Activated T-helper 2 cell treated with anti-CD3 and anti-CD28 coated beads, Interferon-gamma antibody, Interleukin-2, Interleukin-4, amounts not matched to agents 10 μg/mL and 5 μg/mL and 100 μg/mL, durations not matched to agents 14 hours and 24 hours and 36 hours (primary cell): ENCODE measurements at regions of chr19 and their contacts with region 1.

Region 1: DNA sequence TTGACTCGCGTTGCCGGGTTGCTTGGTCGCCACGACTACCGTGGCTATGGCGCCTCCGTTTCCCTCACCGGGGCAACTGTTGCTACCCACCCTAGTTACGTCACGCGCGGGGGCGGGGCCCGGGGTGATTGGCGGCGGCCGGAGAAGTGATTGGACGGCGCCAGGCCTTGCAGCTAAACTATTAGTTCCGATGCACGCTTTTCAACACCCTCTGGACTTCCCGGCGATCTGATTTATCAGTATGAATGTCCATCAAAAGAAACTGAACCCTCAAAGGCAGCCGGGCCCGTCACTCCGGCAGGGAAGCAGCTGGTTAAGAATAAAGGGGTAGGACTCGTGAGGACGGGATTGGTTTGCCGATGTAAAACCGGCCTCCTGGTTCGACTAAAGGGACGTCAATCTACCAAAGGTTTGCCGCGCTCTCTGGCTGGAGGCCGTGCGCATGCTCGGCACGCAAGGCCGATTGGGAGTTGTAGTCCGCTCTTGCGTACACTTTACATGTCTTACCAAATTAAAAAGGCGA is at the start of gene RFX1:
- DNase-seq: peak; percentile 99
- H3K4me3 Mint-ChIP-seq: peak within 1 kb of the TSS; percentile 84
- H3K27ac Mint-ChIP-seq: peak within 1 kb of the TSS; percentile 94
- H3K4me1 Mint-ChIP-seq: peaks cover 34% of the 10 kb centered on the region
- H3K27me3 Mint-ChIP-seq: no peaks in the 10 kb centered on the region
- total RNA-seq, gene RFX1: 15.7 and 17.0 TPM in 2 replicates

Region 2: GRCh38 chr19:13833330-13834243 is 172.7 kb before region 1 on chr19:
- intact Hi-C with region 1: no loop called
- DNase-seq: peak; percentile 90
- H3K4me3 Mint-ChIP-seq: peak overlapping the region; percentile 74
- H3K27ac Mint-ChIP-seq: peak overlapping the region; percentile 90
- H3K4me1 Mint-ChIP-seq: peaks cover 28% of the 10 kb centered on the region
- H3K27me3 Mint-ChIP-seq: no peaks in the 10 kb centered on the region

Region 3: DNA sequence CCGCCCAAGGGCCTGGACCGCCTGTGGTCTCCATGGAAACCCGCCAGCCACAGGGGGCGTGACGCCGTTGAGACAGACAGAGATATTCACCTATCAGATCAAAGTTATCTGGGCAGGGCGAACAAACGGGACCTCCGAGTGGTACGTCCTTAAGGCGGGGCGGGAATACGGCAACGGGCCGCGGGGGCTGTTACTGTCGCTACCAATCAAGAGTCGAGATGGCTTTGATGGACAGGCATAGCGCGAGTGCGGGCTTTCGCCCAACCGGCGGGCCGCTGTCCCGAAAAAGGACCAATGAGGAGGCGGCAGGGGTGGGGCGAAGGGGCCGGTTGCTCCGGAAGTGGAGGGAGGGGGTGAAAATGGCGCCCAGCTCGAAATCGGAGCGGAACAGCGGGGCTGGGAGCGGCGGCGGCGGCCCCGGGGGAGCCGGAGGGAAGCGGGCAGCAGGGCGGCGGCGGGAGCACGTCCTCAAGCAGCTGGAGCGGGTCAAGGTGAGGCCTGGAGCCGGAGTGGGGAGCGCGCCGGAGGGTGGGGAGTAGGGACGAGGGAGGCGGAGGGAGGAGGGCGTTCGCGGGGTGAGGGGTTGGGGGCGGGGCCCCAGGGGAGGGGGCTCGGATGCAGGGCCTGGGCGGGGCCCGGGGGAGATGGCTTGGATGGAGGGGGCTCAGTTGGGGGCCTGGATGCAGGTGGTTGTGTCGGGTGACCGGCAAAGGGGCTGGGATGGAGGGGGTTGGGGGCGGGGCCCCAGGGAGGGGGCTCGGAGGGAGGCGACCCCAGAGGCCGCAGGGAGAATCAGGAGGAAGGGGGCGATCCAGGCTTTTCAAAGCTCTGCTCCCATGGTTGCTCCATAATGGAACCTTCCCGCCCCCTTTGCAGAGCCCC is 53.9 kb before region 1 on chr19 and contains the start of gene DCAF15:
- intact Hi-C with region 1: loop called (anchors 1 kb)
- DNase-seq: peak; percentile 99
- H3K4me3 Mint-ChIP-seq: peak within 1 kb of the TSS; percentile 97
- H3K27ac Mint-ChIP-seq: peak within 1 kb of the TSS; percentile 93
- H3K4me1 Mint-ChIP-seq: peaks cover 15% of the 10 kb centered on the region
- H3K27me3 Mint-ChIP-seq: peaks cover 2% of the 10 kb centered on the region
- total RNA-seq, gene DCAF15: 60.6 and 64.0 TPM in 2 replicates

Region 4: DNA sequence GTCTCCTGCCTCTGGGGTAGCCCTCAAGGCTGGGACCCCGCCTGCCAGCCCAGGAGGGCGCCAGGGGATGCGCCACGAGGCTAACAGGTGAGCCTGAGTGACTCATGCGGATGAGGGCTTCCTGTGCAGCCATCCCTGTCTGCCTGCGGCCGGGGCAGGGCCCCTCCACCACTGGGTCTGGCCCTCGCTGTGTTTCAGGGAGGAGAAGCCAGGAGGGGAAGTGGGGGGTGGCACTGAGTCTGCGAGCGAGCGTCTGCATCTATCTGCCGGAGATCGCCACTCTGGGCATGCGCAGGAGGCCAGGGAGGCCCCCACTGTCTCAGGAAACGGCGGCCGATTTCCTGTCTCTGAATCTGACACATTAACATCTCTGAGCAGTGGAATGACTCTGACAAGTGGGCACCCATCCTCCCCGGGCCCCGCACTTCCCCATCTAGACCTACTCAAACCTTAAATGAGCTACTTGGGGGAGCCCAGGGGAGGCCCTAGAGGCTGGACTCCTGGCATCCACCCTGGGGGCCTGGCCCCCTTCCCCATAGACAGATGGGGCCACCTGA is 19.9 kb before region 1 on chr19:
- intact Hi-C with region 1: loop called (anchors 1 kb)
- DNase-seq: peak; percentile 98
- H3K4me3 Mint-ChIP-seq: peak overlapping the region; percentile 60
- H3K27ac Mint-ChIP-seq: peak overlapping the region; percentile 95
- H3K4me1 Mint-ChIP-seq: peaks cover 33% of the 10 kb centered on the region
- H3K27me3 Mint-ChIP-seq: no peaks in the 10 kb centered on the region

Region 5: DNA sequence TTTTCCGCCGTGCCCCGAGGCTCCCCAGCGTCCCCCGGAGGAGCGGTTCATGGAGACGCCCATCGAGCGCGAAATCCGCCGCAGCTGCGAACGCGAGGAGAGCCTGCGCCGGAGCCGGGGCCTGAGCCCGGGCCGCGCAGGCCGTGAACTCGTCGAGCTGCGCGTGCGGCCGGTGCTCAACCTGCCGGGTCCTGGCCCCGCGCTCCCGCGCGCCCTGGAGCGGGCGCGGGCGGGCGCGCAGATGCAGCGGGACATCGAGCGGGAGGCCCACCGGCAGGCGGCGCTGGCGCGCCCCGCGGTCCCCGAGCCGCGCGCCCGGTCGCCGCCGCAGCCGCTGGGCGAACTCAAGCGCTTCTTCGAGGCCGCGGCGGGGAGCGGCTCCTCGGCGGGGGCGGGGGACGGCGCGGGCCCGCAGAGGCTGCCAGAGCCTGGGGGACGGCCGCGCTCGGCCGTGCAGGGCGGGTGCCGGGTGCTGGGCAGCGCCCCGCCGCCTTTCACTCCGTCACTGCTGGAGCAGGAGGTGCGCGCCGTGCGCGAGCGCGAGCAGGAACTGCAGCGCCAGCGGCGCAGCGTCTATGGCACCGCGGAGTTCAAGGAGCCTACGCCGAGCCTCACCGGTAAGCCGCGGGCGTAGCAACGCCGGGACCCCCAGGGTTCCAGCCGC is 67.1 kb after region 1 on chr19:
- intact Hi-C with region 1: loop called (anchors 5 kb)
- DNase-seq: peak; percentile 77
- H3K4me3 Mint-ChIP-seq: peak overlapping the region; percentile 97
- H3K27ac Mint-ChIP-seq: peak overlapping the region; percentile 93
- H3K4me1 Mint-ChIP-seq: peaks cover 8% of the 10 kb centered on the region
- H3K27me3 Mint-ChIP-seq: no peaks in the 10 kb centered on the region

Region 6: GRCh38 chr19:14218620-14219330 is 212.5 kb after region 1 on chr19:
- intact Hi-C with region 1: no loop called
- DNase-seq: no peak
- H3K4me3 Mint-ChIP-seq: no peak overlapping the region
- H3K27ac Mint-ChIP-seq: no peak overlapping the region
- H3K4me1 Mint-ChIP-seq: peaks cover 11% of the 10 kb centered on the region
- H3K27me3 Mint-ChIP-seq: peaks cover 2% of the 10 kb centered on the region